ENCODE measurements at regions of chr15 and their contacts with region 1.

Region 1: GRCh38 chr15:27358751-27359434 is 387.9 kb downstream of the GABRG3 start:
- DNase-seq: peak; percentile 82
- ATAC-seq: peak; percentile 88
- H3K4me3 Mint-ChIP-seq: peak overlapping the region; percentile 51
- H3K27ac Mint-ChIP-seq: no peak overlapping the region
- H3K4me1 Mint-ChIP-seq: peaks cover 8% of the 10 kb centered on the region
- H3K27me3 Mint-ChIP-seq: no peaks in the 10 kb centered on the region
- CTCF ChIP-seq: peak; percentile 94

Region 2: DNA sequence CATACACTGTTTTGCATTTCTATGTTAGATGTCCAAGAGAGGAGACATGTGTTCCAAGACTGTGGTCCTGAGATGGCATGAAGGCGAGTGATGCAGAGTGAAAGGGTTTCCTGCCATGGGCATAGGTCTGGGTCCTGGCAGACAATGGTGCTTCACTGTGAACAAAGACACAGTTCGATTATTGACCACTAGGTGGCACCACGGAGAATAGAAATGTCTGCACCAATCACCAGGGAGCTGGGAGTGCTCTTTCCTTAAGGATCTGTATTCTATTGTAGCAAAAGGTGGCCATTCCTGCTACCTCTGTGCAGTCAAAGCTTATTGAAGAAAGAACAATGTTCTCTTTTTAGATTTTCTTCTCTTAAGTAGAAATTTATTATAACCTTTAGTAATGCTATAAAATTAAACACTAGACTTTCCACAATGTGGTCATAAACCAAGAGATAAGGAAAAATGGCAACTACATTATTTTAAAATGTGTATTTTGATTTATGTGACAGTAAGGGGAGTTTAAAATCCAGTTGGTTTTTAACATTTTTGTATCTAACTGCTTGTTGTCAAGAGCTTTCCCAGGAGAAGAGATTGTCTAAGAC is 299.2 kb before region 1 on chr15:
- CTCF ChIA-PET with region 1: interaction called, 16 read pairs
- POLR2A ChIA-PET with region 1: no interaction called
- DNase-seq: peak; percentile 72
- ATAC-seq: peak; percentile 95
- H3K4me3 Mint-ChIP-seq: no peak overlapping the region
- H3K27ac Mint-ChIP-seq: no peak overlapping the region
- H3K4me1 Mint-ChIP-seq: no peaks in the 10 kb centered on the region
- H3K27me3 Mint-ChIP-seq: no peaks in the 10 kb centered on the region
- CTCF ChIP-seq: peak; percentile 59; the same call in 1 of the 2 replicates

Region 3: DNA sequence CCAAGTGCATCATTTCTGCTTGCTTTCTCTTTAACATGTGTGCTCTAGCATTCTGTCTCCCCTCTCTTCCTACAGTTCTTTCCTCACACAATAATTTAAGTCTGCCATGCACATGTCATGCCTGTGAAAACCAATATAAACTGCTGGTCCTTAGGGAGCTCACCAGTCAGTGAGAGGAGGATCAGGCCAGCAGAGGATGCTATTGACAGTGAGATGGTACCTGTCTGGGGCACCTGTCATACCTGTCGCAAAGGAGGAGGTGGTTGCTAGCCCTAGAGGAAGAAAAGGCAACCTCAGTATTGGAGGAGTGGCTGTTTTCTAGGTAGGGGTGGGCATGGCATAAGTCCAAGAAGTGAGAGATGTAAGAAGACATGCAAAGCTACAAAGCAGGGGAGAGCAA is 193.3 kb before region 1 on chr15:
- CTCF ChIA-PET with region 1: interaction called, 21 read pairs
- POLR2A ChIA-PET with region 1: no interaction called
- DNase-seq: no peak
- ATAC-seq: no peak; the same call in 1 of the 2 replicates
- H3K4me3 Mint-ChIP-seq: no peak overlapping the region
- H3K27ac Mint-ChIP-seq: no peak overlapping the region
- H3K4me1 Mint-ChIP-seq: peaks cover 16% of the 10 kb centered on the region
- H3K27me3 Mint-ChIP-seq: no peaks in the 10 kb centered on the region
- CTCF ChIP-seq: no peak

Region 4: GRCh38 chr15:27238209-27238608 is 120.7 kb before region 1 on chr15:
- CTCF ChIA-PET with region 1: interaction called, 14 read pairs
- POLR2A ChIA-PET with region 1: interaction called, 5 read pairs
- DNase-seq: peak; percentile 69
- ATAC-seq: peak; percentile 65
- H3K4me3 Mint-ChIP-seq: no peak overlapping the region
- H3K27ac Mint-ChIP-seq: no peak overlapping the region
- H3K4me1 Mint-ChIP-seq: peaks cover 8% of the 10 kb centered on the region
- H3K27me3 Mint-ChIP-seq: no peaks in the 10 kb centered on the region
- CTCF ChIP-seq: peak; percentile 54

Region 5: GRCh38 chr15:27328608-27329007 is 30.3 kb before region 1 on chr15:
- CTCF ChIA-PET with region 1: interaction called, 10 read pairs
- POLR2A ChIA-PET with region 1: no interaction called
- DNase-seq: no peak
- ATAC-seq: no peak
- H3K4me3 Mint-ChIP-seq: no peak overlapping the region
- H3K27ac Mint-ChIP-seq: no peak overlapping the region
- H3K4me1 Mint-ChIP-seq: peaks cover 4% of the 10 kb centered on the region; the same call in 1 of the 2 replicates
- H3K27me3 Mint-ChIP-seq: no peaks in the 10 kb centered on the region
- CTCF ChIP-seq: no peak

Region 6: GRCh38 chr15:27342991-27343390 is 15.9 kb before region 1 on chr15:
- CTCF ChIA-PET with region 1: interaction called, 13 read pairs
- POLR2A ChIA-PET with region 1: no interaction called
- DNase-seq: peak; percentile 29
- ATAC-seq: peak; percentile 78
- H3K4me3 Mint-ChIP-seq: no peak overlapping the region
- H3K27ac Mint-ChIP-seq: no peak overlapping the region
- H3K4me1 Mint-ChIP-seq: peaks cover 32% of the 10 kb centered on the region
- H3K27me3 Mint-ChIP-seq: no peaks in the 10 kb centered on the region
- CTCF ChIP-seq: no peak

Region 7: DNA sequence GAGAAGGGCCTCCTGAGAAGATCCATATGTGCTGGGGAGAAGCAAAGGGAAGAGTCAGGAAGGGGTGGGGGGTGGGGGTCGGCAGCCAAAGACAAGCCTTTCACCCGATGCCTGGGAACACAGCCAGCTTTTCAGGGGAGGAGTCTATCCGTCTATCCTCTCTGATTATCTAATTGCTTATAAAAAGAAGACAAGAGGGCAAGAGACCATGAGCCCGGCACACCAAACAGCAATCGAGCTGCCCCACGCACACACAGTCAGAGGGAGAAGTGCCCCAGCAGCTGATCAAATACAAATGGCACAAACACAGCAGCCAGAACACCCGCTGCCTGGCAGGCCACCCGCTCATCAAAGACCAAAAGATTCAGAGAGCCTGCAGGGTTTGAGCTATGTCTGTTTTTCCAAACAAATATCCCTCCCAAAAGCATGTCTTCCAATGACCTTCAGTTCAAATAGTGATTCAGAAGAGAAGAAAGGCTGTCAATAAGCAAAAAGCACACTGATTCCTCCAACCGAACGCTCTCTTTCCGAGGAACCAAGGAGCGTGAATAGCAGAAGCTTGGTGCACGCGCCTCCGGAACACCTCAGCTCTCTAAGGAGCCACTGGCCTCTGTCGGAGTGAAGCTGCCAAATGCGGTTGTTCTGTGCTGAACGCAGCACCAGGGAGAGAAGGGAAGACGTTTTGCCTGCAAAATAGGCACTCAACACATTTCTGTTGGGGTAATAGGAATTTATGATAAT is 321.0 kb after region 1 on chr15:
- CTCF ChIA-PET with region 1: interaction called, 10 read pairs
- POLR2A ChIA-PET with region 1: no interaction called
- DNase-seq: no peak
- ATAC-seq: peak; percentile 40
- H3K4me3 Mint-ChIP-seq: no peak overlapping the region; the same call in 1 of the 2 replicates
- H3K27ac Mint-ChIP-seq: peak overlapping the region; percentile 2; the same call in 1 of the 2 replicates
- H3K4me1 Mint-ChIP-seq: peaks cover 27% of the 10 kb centered on the region
- H3K27me3 Mint-ChIP-seq: peaks cover 8% of the 10 kb centered on the region
- CTCF ChIP-seq: no peak

Measured in WTC11 (cell line).